H1 (cell line): ENCODE measurements at regions of chr19 and their contacts with region 1.

Region 1: DNA sequence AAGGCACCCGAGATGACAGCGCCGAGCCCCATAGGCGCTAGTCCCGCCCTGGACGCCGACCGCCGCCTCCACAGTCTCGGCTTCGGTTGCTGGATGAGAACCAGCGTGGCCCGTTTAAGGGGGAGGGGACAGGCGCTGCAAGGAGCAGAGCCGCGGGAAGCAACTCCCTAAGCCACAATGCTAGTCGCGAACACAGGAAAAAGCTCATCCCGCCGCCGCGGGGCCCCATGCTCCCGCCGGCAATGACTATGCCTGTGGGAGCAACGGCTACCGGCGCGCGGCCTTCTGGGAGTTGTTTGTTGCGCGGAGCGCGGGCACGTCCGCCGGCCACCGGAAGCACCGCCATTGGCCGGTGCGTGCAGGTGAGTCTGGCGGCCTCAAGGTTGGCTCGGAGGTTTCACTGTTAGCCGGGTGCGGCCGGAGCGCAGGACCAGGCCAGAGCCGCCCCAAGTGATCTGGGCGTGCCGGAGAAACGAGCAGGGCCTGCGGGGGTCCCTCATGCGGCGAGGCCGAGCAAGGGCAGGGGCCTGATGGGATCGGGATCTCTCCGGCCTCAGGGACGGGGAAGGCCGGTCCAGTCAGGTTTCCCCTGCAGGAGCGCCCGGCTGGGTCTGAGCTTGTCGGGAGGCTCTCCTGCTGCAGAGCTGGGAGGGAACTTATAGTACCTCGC is at the start of gene ZNF544:
- DNase-seq: peak in 1 of 2 experiments; percentile 88
- H3K4me3 ChIP-seq: peak within 1 kb of the TSS; percentile 81 to 96 (median 90)
- H3K27ac ChIP-seq: peak within 1 kb of the TSS; percentile 97
- H3K4me1 ChIP-seq: peaks cover 3 to 14% (median 5%) of the 10 kb centered on the region in 4 experiments
- H3K27me3 ChIP-seq: no peaks in the 10 kb centered on the region
- CTCF ChIP-seq: peak in 2 of 3 experiments; percentile 1; a peak in 2 of 4 replicates
- EP300 ChIP-seq: no peak
- POLR2A ChIP-seq: peak; percentile 87 to 90
- RAD21 ChIP-seq: no peak
- total RNA-seq, gene ZNF544: 54.5 and 60.8 TPM in 2 replicates

Region 2: DNA sequence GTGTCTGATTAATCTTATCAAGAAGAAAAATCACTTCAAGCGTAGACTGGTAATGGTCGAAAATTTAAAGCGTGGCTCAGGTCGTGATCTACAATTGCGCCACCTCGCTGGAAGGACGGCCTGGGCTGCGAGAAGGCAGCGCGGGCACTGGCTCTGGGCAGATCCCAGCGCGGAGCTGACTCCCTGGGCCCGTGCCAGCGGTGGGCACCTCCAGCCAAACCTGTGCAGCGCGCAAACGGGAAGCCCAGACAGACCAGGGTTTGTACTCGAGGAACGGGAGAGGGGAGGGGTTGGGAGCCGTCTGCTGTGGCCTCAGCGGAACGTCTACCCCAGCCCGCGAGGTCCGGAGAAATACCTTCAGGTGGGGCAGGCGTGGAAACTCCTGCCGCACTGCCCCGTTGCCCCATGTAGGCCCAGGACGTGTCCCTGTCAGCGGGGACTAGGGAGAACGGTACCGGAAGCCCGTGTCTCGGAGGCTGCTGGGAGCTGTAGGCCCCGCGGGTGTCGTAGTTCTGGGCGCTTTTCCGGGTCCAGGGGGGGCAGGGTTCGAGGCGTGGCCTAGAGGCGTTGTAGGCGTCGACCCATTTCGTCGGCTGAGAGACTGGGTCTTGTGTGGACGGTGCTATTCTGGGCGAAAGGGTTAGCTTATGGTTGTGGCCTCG is 24.8 kb before region 1 on chr19:
- CTCF ChIA-PET with region 1: no interaction called
- POLR2A ChIA-PET with region 1: interaction called, 37 read pairs
- DNase-seq: no peak
- H3K4me3 ChIP-seq: no peak overlapping the region
- H3K27ac ChIP-seq: no peak overlapping the region
- H3K4me1 ChIP-seq: no peaks in the 10 kb centered on the region
- H3K27me3 ChIP-seq: no peaks in the 10 kb centered on the region
- CTCF ChIP-seq: no peak
- EP300 ChIP-seq: no peak
- POLR2A ChIP-seq: no peak
- RAD21 ChIP-seq: no peak

Region 3: GRCh38 chr19:58252102-58252685 is 23.5 kb after region 1 on chr19:
- CTCF ChIA-PET with region 1: no interaction called
- POLR2A ChIA-PET with region 1: interaction called, 16 read pairs
- DNase-seq: no peak
- H3K4me3 ChIP-seq: peak overlapping the region in 1 of 4 experiments; percentile 10; a peak in 1 of 8 replicates
- H3K27ac ChIP-seq: no peak overlapping the region
- H3K4me1 ChIP-seq: no peaks in the 10 kb centered on the region
- H3K27me3 ChIP-seq: no peaks in the 10 kb centered on the region
- CTCF ChIP-seq: no peak
- EP300 ChIP-seq: no peak
- POLR2A ChIP-seq: no peak
- RAD21 ChIP-seq: no peak

Region 4: GRCh38 chr19:58278157-58279041 is 49.7 kb after region 1 on chr19 and contains the start of gene ZNF8:
- CTCF ChIA-PET with region 1: interaction called, 6 read pairs
- POLR2A ChIA-PET with region 1: interaction called, 17 read pairs
- DNase-seq: peak; percentile 96 to 97
- H3K4me3 ChIP-seq: peak within 1 kb of the TSS; percentile 86 to 97 (median 94)
- H3K27ac ChIP-seq: peak within 1 kb of the TSS; percentile 83
- H3K4me1 ChIP-seq: peaks cover 4 to 11% (median 6%) of the 10 kb centered on the region in 4 experiments; a peak in 6 of 7 replicates
- H3K27me3 ChIP-seq: no peaks in the 10 kb centered on the region
- CTCF ChIP-seq: no peak
- EP300 ChIP-seq: no peak
- POLR2A ChIP-seq: peak; percentile 81 to 92
- RAD21 ChIP-seq: no peak
- total RNA-seq, gene ZNF8: 20.5 and 21.5 TPM in 2 replicates

Region 5: GRCh38 chr19:58317476-58318072 is 88.9 kb after region 1 on chr19:
- CTCF ChIA-PET with region 1: interaction called, 4 read pairs
- POLR2A ChIA-PET with region 1: interaction called, 25 read pairs
- DNase-seq: no peak
- H3K4me3 ChIP-seq: no peak overlapping the region
- H3K27ac ChIP-seq: no peak overlapping the region
- H3K4me1 ChIP-seq: no peaks in the 10 kb centered on the region
- H3K27me3 ChIP-seq: no peaks in the 10 kb centered on the region; a peak in 1 of 7 replicates
- CTCF ChIP-seq: no peak
- EP300 ChIP-seq: no peak
- POLR2A ChIP-seq: no peak
- RAD21 ChIP-seq: no peak